HEK293 (cell line): ENCODE measurements at regions of chr15 and their contacts with region 1.

Region 1: DNA sequence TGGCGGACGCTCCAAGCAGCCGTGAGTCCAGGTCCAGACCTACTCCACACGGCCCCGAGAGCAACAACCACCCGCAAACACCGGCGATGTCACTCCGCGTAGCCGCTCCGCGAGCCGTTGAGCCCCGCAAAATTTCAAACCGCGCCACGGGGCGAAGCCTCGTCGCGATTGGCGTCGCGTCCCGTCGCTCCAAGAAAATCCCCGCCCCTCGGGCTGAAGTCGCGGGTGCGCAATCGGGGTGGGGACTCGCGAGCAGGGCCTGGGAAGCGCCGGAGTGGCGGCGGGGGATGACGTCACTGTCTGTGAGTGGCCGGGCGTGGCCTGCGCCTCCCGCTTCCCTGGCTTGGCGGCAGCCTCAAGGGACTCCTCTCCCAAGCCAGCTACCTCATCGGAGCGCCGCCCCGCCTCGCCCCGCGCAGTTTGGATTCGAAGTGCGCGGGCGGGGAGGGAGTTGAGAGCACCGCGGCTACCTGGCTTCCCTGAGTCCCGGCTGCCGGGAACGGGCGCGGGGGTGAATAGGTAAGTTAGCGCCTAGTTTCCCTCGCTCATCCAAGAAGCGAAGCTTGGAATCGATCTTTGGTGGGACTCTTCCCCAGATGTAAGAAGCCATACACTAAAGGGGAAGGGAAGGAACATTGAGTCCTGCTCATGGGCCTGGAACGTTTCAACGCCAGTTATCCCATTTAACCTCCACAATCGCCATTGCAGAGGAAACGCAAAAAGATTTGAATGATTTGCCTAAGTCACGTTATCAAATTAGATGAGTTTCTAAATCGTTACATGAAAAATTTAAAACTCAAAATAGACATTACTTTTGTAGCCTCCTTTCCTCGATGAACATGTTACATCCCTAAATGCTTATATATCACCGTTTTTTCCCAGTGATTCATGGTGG is at the start of gene PRC1:
- H3K4me3 ChIP-seq: peak within 1 kb of the TSS; percentile 67
- H3K27ac ChIP-seq: peak within 1 kb of the TSS; percentile 98
- H3K4me1 ChIP-seq: peaks cover 9% of the 10 kb centered on the region
- CTCF ChIP-seq: no peak

Region 2: GRCh38 chr15:91022075-91022835 is 27.6 kb after region 1 on chr15 and contains the start of gene VPS33B:
- CTCF ChIA-PET with region 1: interaction called, 5 read pairs
- POLR2A ChIA-PET with region 1: interaction called, 14 read pairs
- H3K4me3 ChIP-seq: peak within 1 kb of the TSS; percentile 74
- H3K27ac ChIP-seq: peak within 1 kb of the TSS; percentile 61
- H3K4me1 ChIP-seq: peaks cover 6% of the 10 kb centered on the region; the same call in 1 of the 2 replicates
- CTCF ChIP-seq: peak; percentile 47; the same call in 1 of the 2 replicates